ENCODE measurements at regions of chr1 and their contacts with region 1.

Region 1: GRCh38 chr1:207259391-207259790 is 62.1 kb upstream of the CD55 start:
- DNase-seq: no peak
- H3K4me3 ChIP-seq: no peak overlapping the region
- H3K27ac ChIP-seq: no peak overlapping the region
- H3K27me3 ChIP-seq: no peaks in the 10 kb centered on the region
- CTCF ChIP-seq: peak; percentile 44

Region 2: GRCh38 chr1:207218512-207219362 is 40.7 kb before region 1 on chr1:
- CTCF ChIA-PET with region 1: interaction called, 10 read pairs
- POLR2A ChIA-PET with region 1: no interaction called
- DNase-seq: no peak
- H3K4me3 ChIP-seq: no peak overlapping the region
- H3K27ac ChIP-seq: no peak overlapping the region
- H3K27me3 ChIP-seq: peaks cover 2% of the 10 kb centered on the region
- CTCF ChIP-seq: no peak

Measured in AG04450 (cell line).